ENCODE measurements at regions of chr19 and their contacts with region 1.

Region 1: DNA sequence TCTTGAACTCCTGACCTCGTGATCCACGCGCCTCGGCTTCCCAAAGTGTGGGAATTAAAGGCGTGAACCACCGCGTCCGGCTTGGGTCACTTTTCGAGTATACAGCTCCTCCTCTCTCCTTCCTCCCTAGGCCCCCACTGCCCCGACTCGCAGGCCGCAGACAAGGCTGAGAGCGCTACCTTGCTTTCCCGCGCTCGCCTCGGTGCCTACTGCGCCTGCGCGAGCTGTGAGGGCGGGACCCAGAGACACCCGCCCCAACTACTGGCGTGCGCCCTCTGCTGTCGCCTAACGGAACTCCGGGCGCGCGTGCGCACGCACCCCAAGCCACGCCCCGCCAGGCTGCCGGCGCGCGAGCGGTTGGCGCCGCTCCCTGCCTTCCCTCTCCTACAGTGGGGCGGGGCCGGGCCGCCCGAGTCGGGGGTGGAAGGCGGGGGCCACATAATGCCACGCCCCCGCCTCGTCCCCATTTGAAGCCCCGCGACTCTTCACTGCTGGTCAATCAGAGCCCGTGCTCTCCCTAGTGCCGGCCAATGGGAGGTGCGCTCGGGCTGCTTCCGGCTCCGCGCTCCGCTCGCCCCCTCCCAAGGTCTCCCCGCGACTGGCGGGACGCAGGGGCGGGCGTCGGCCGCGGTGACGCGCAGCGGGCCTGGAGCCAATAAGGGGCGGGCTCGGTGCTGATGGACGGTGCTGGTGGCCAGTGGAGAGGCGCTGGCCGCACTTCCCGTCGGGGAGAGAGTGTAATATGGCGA is at the start of gene RAB8A:
- DNase-seq: peak; percentile 99 to 100 (median 99)
- H3K4me3 ChIP-seq: peak within 1 kb of the TSS; percentile 99
- H3K27ac ChIP-seq: peak within 1 kb of the TSS; percentile 69 to 82
- H3K4me1 ChIP-seq: peaks cover 8% of the 10 kb centered on the region
- H3K27me3 ChIP-seq: no peaks in the 10 kb centered on the region
- CTCF ChIP-seq: peak; percentile 99 to 100 (median 99)
- EP300 ChIP-seq: peak; percentile 48
- POLR2A ChIP-seq: peak; percentile 17
- total RNA-seq, gene RAB8A: 17.2 to 70.5 (median 52.9) TPM

Region 2: GRCh38 chr19:15115111-15116053 is 996.0 kb before region 1 on chr19:
- intact Hi-C with region 1: loop called in 1 of 4 experiments (anchors 10 kb)
- DNase-seq: peak; percentile 76 to 88 (median 76)
- H3K4me3 ChIP-seq: no peak overlapping the region
- H3K27ac ChIP-seq: peak overlapping the region in 1 of 2 donors; percentile 30
- H3K4me1 ChIP-seq: no peaks in the 10 kb centered on the region
- H3K27me3 ChIP-seq: no peaks in the 10 kb centered on the region
- CTCF ChIP-seq: no peak
- EP300 ChIP-seq: no peak
- POLR2A ChIP-seq: no peak

Region 3: GRCh38 chr19:16035601-16036297 is 75.6 kb before region 1 on chr19:
- intact Hi-C with region 1: loop called in 1 of 4 experiments (anchors 5 kb)
- DNase-seq: no peak
- H3K4me3 ChIP-seq: no peak overlapping the region
- H3K27ac ChIP-seq: no peak overlapping the region
- H3K4me1 ChIP-seq: no peaks in the 10 kb centered on the region
- H3K27me3 ChIP-seq: no peaks in the 10 kb centered on the region
- CTCF ChIP-seq: no peak
- EP300 ChIP-seq: no peak
- POLR2A ChIP-seq: no peak

Region 4: DNA sequence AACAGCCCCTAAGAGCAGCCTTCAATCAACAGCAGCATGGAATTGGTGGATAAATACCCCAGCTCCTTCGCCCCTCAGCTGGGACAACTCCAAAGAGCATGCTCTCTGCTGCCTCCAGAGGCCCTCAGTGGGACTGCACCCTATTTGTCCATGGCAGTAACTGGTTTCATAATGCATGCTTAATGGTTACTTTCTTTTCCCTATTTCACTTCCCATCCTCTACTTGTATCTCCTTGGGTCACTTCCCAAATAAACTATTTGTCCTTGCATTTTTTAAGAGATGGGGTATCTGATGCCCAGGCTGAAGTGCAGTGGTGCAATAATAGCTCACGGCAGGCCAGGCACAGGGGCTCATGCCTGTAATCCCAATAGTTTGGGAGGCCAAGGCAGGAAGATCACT is 48.5 kb before region 1 on chr19:
- intact Hi-C with region 1: loop called in 1 of 4 experiments (anchors 10 kb)
- DNase-seq: no peak
- H3K4me3 ChIP-seq: no peak overlapping the region
- H3K27ac ChIP-seq: no peak overlapping the region
- H3K4me1 ChIP-seq: no peaks in the 10 kb centered on the region
- H3K27me3 ChIP-seq: no peaks in the 10 kb centered on the region
- CTCF ChIP-seq: peak in 2 of 3 donors; percentile 14 to 18
- EP300 ChIP-seq: no peak
- POLR2A ChIP-seq: no peak

Region 5: GRCh38 chr19:16076154-16076957 is 35.0 kb before region 1 on chr19 and contains the start of gene TPM4:
- intact Hi-C with region 1: loop called in 2 of 4 experiments (anchors 5 kb)
- DNase-seq: peak; percentile 96 to 97 (median 96)
- H3K4me3 ChIP-seq: peak within 1 kb of the TSS; percentile 54
- H3K27ac ChIP-seq: peak within 1 kb of the TSS; percentile 98 to 100
- H3K4me1 ChIP-seq: peaks cover 13% of the 10 kb centered on the region
- H3K27me3 ChIP-seq: no peaks in the 10 kb centered on the region
- CTCF ChIP-seq: peak in 1 of 3 donors; percentile 24
- EP300 ChIP-seq: peak; percentile 91
- POLR2A ChIP-seq: peak; percentile 85
- total RNA-seq, gene TPM4: 286 to 642 (median 554) TPM

Region 6: DNA sequence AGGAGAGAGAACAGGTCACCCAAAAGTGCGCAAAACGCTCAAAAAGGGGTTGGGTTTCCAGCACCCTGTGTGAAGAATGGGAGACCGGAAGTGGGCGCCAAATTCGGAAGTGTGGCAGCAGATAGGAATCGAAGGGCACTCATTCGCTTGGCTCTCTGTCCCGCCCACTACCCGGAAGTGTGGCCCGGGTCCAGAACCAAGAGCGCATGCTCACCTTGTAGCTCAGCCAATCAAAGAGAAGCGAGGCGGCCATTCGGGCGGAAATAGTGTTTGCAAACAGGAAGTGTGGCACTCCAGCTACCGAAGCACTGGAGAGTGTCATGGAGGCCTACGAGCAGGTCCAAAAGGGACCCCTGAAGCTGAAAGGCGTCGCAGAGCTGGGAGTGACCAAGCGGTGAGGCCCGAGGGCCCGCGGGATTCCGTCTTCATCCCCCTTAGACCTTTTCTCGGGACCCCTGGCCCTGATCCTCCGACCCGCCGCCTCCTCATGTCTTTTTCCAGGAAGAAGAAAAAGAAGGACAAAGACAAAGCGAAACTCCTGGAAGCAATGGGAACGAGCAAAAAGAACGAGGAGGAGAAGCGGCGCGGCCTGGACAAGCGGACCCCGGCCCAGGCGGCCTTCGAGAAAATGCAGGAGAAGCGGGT is 73.9 kb after region 1 on chr19 and contains the start of gene FAM32A:
- intact Hi-C with region 1: loop called in 1 of 4 experiments (anchors 10 kb)
- DNase-seq: peak; percentile 99 to 100 (median 99)
- H3K4me3 ChIP-seq: peak within 1 kb of the TSS; percentile 63
- H3K27ac ChIP-seq: peak within 1 kb of the TSS in 1 of 2 donors; percentile 26
- H3K4me1 ChIP-seq: no peaks in the 10 kb centered on the region
- H3K27me3 ChIP-seq: no peaks in the 10 kb centered on the region
- CTCF ChIP-seq: peak; percentile 14 to 41 (median 26)
- EP300 ChIP-seq: no peak
- POLR2A ChIP-seq: peak; percentile 53
- total RNA-seq, gene FAM32A: 37.9 to 62.6 (median 43.7) TPM